ENCODE measurements at regions of chr11 and their contacts with region 1.

Region 1: GRCh38 chr11:1939006-1939625 is 8.0 kb upstream of the MRPL23 start:
- DNase-seq: peak in 1 of 2 donors; percentile 68
- H3K4me3 ChIP-seq: no peak overlapping the region
- CTCF ChIP-seq: no peak
- POLR2A ChIP-seq: no peak

Region 2: GRCh38 chr11:1893581-1894359 is 45.3 kb before region 1 on chr11:
- intact Hi-C with region 1: loop called (anchors 1 kb)
- DNase-seq: no peak
- H3K4me3 ChIP-seq: no peak overlapping the region
- CTCF ChIP-seq: no peak
- POLR2A ChIP-seq: no peak

Region 3: GRCh38 chr11:1913271-1914060 is 25.6 kb before region 1 on chr11:
- intact Hi-C with region 1: loop called (anchors 1 kb)
- DNase-seq: no peak
- H3K4me3 ChIP-seq: no peak overlapping the region
- CTCF ChIP-seq: no peak
- POLR2A ChIP-seq: no peak